Panc1 (cell line): ENCODE measurements at regions of chr4 and their contacts with region 1.

Region 1: GRCh38 chr4:112321776-112322684 is 24.9 kb downstream of the ALPK1 start:
- DNase-seq: peak; percentile 38
- ATAC-seq: no peak
- H3K4me3 ChIP-seq: no peak overlapping the region
- H3K27ac ChIP-seq: no peak overlapping the region
- H3K4me1 ChIP-seq: no peaks in the 10 kb centered on the region
- H3K27me3 ChIP-seq: no peaks in the 10 kb centered on the region
- CTCF ChIP-seq: peak; percentile 84

Region 2: DNA sequence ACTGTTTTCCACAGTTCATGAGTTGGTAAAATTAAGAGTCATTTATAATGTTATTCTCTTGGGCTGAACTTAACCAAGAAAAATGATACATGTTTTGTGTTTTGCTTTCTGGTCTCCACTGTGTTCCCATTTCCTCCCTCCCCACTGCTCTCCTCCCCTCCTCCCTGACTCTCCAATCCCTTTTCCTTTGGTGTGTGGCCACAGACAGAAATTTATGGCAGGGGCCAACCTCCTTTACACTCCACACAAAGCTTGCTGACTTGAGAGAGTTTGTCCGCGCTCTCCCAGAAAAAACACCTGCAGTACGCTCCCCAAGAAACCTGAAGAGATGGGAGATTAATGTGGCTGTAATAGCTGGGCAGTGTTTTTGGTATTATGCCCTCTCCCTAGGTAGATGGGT is 64.0 kb after region 1 on chr4:
- CTCF ChIA-PET with region 1: no interaction called
- POLR2A ChIA-PET with region 1: no interaction called
- in situ Hi-C with region 1: no loop called
- intact Hi-C with region 1: no loop called
- DNase-seq: no peak
- ATAC-seq: no peak
- H3K4me3 ChIP-seq: no peak overlapping the region
- H3K27ac ChIP-seq: no peak overlapping the region
- H3K4me1 ChIP-seq: no peaks in the 10 kb centered on the region
- H3K27me3 ChIP-seq: no peaks in the 10 kb centered on the region
- CTCF ChIP-seq: no peak

Region 3: DNA sequence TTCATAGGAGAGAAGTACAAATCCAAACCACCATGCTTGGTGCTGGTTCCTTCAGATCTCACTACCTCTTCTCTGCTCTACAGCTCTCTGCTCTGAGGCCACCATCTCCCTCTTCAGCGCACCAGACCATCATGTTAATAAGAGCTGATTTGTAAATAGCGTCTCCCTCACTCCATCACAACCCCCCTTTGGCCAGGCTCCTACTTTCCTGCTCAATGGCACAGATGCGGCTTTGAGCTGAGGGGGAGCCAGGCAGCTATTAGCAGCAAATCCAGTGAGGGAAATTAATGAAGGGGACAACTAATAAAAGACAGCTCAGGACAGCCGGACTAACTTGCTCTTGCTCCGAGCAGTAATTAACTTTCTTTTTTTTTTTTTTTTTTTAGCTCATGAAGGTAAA is 180.8 kb after region 1 on chr4:
- CTCF ChIA-PET with region 1: interaction called, 10 read pairs
- POLR2A ChIA-PET with region 1: no interaction called
- in situ Hi-C with region 1: no loop called
- intact Hi-C with region 1: no loop called
- DNase-seq: no peak
- ATAC-seq: no peak
- H3K4me3 ChIP-seq: no peak overlapping the region
- H3K27ac ChIP-seq: no peak overlapping the region
- H3K4me1 ChIP-seq: no peaks in the 10 kb centered on the region
- H3K27me3 ChIP-seq: no peaks in the 10 kb centered on the region
- CTCF ChIP-seq: no peak